B cell (primary cell): ENCODE measurements at regions of chr18 and their contacts with region 1.

Region 1: DNA sequence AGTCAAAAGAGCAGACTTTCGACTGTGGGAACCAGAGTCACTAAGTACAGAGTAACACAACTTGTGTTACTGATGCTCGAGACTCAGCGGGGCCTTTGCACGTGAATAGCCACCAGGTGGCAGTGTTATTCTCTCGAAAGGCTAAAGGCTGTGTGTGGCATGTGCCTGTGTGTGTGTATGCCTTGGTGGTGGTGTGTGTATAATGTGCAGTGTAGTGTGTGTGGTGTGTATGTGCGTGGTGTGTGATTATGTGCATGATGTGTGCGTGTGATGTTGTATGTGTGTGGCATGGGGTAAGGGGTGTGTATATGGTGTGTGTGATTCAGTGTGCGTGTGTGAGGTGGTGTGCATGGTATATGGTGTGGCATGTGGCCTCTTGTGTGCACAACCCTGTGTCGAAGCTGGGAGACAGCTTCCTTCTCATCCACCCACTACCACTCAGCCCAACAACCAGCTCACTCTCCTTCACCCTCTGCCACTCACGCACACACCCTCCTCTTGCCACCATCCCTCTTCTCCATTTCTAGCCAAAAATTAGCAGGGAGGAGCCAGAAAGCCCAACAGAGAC is 83.0 kb upstream of the ZNF532 start:
- DNase-seq: peak; percentile 84
- ATAC-seq: peak; percentile 93
- H3K4me3 ChIP-seq: no peak overlapping the region
- H3K4me3 Mint-ChIP-seq: no peak overlapping the region
- H3K27ac ChIP-seq: no peak overlapping the region
- H3K27ac Mint-ChIP-seq: no peak overlapping the region
- H3K4me1 ChIP-seq: peaks cover 2 to 5% of the 10 kb centered on the region in 2 donors
- H3K4me1 Mint-ChIP-seq: peaks cover 3% of the 10 kb centered on the region
- H3K27me3 ChIP-seq: no peaks in the 10 kb centered on the region
- H3K27me3 Mint-ChIP-seq: no peaks in the 10 kb centered on the region
- CTCF ChIP-seq: peak; percentile 93

Region 2: GRCh38 chr18:58792086-58792485 is 10.4 kb after region 1 on chr18:
- CTCF ChIA-PET with region 1: interaction called, 14 read pairs
- POLR2A ChIA-PET with region 1: no interaction called
- intact Hi-C with region 1: no loop called
- DNase-seq: peak; percentile 57
- ATAC-seq: peak; percentile 91
- H3K4me3 ChIP-seq: peak overlapping the region in 4 of 5 experiments; percentile 17 to 56 (median 32)
- H3K4me3 Mint-ChIP-seq: peak overlapping the region; percentile 80
- H3K27ac ChIP-seq: peak overlapping the region in 1 of 2 donors; percentile 16
- H3K27ac Mint-ChIP-seq: peak overlapping the region; percentile 74
- H3K4me1 ChIP-seq: peaks cover 2 to 13% of the 10 kb centered on the region in 2 donors
- H3K4me1 Mint-ChIP-seq: peaks cover 8% of the 10 kb centered on the region
- H3K27me3 ChIP-seq: no peaks in the 10 kb centered on the region
- H3K27me3 Mint-ChIP-seq: no peaks in the 10 kb centered on the region
- CTCF ChIP-seq: no peak

Region 3: GRCh38 chr18:58960946-58961722 is 179.4 kb after region 1 on chr18:
- CTCF ChIA-PET with region 1: interaction called, 4 read pairs
- POLR2A ChIA-PET with region 1: no interaction called
- intact Hi-C with region 1: loop called (anchors 10 kb)
- DNase-seq: no peak
- ATAC-seq: no peak
- H3K4me3 ChIP-seq: no peak overlapping the region
- H3K4me3 Mint-ChIP-seq: peak overlapping the region; percentile 35
- H3K27ac ChIP-seq: peak overlapping the region in 1 of 2 donors; percentile 16
- H3K27ac Mint-ChIP-seq: peak overlapping the region; percentile 77
- H3K4me1 ChIP-seq: peaks cover 32 to 33% of the 10 kb centered on the region in 2 donors
- H3K4me1 Mint-ChIP-seq: peaks cover 50% of the 10 kb centered on the region
- H3K27me3 ChIP-seq: no peaks in the 10 kb centered on the region
- H3K27me3 Mint-ChIP-seq: no peaks in the 10 kb centered on the region
- CTCF ChIP-seq: no peak

Region 4: GRCh38 chr18:59056706-59057492 is 275.2 kb after region 1 on chr18:
- CTCF ChIA-PET with region 1: interaction called, 471 read pairs
- POLR2A ChIA-PET with region 1: no interaction called
- intact Hi-C with region 1: loop called (anchors 1 kb)
- DNase-seq: peak; percentile 84
- ATAC-seq: peak; percentile 80
- H3K4me3 ChIP-seq: no peak overlapping the region
- H3K4me3 Mint-ChIP-seq: no peak overlapping the region
- H3K27ac ChIP-seq: no peak overlapping the region
- H3K27ac Mint-ChIP-seq: peak overlapping the region; percentile 23
- H3K4me1 ChIP-seq: peaks cover 5 to 8% of the 10 kb centered on the region in 2 donors
- H3K4me1 Mint-ChIP-seq: peaks cover 13% of the 10 kb centered on the region
- H3K27me3 ChIP-seq: no peaks in the 10 kb centered on the region
- H3K27me3 Mint-ChIP-seq: peaks cover 6% of the 10 kb centered on the region
- CTCF ChIP-seq: peak; percentile 91

Region 5: GRCh38 chr18:59085797-59086196 is 304.1 kb after region 1 on chr18:
- CTCF ChIA-PET with region 1: interaction called, 16 read pairs
- POLR2A ChIA-PET with region 1: no interaction called
- intact Hi-C with region 1: no loop called
- DNase-seq: no peak
- ATAC-seq: no peak
- H3K4me3 ChIP-seq: no peak overlapping the region
- H3K4me3 Mint-ChIP-seq: no peak overlapping the region
- H3K27ac ChIP-seq: no peak overlapping the region
- H3K27ac Mint-ChIP-seq: no peak overlapping the region
- H3K4me1 ChIP-seq: peaks cover 15 to 19% of the 10 kb centered on the region in 2 donors
- H3K4me1 Mint-ChIP-seq: peaks cover 29% of the 10 kb centered on the region
- H3K27me3 ChIP-seq: peaks cover 0 to 5% (median 0%) of the 10 kb centered on the region in 4 experiments
- H3K27me3 Mint-ChIP-seq: peaks cover 6% of the 10 kb centered on the region
- CTCF ChIP-seq: no peak